Sciatic nerve (tissue), 2 donors: ENCODE measurements at regions of chr18 and their contacts with region 1.

Region 1: GRCh38 chr18:12726774-12727550 is 24.1 kb downstream of the PSMG2 start:
- DNase-seq: peak; percentile 77
- ATAC-seq: peak; percentile 56

Region 2: DNA sequence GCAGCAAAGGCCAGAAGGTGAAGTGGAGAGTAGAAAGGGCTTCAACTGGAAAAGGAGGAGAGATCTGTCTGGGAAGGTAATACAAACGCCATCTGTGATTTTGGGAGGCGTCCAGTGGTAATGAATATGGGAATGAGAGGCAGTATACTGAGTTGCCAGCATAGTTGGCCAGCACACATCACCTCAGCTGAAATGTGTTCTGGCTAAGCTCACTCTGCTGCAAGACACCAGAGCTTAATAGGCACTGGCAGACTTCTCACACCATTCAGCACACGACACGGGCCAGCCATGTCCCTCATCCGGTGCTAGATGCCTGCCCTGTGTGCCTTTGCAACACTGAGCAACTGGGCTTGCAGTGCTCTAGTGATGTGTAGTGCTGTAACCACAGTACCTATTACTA is 1854.7 kb before region 1 on chr18:
- intact Hi-C with region 1: no loop called
- DNase-seq: no peak
- ATAC-seq: no peak

Region 3: GRCh38 chr18:11577271-11578112 is 1149.5 kb before region 1 on chr18:
- intact Hi-C with region 1: no loop called
- DNase-seq: no peak
- ATAC-seq: no peak

Region 4: GRCh38 chr18:12531749-12532148 is 195.2 kb before region 1 on chr18:
- intact Hi-C with region 1: no loop called
- DNase-seq: no peak
- ATAC-seq: no peak

Region 5: GRCh38 chr18:12934454-12935071 is 207.6 kb after region 1 on chr18:
- intact Hi-C with region 1: loop called (anchors 1 kb)
- DNase-seq: peak; percentile 91
- ATAC-seq: peak; percentile 89